Upper lobe of right lung (tissue), 1 donor: ENCODE measurements at regions of chr12 and their contacts with region 1.

Region 1: DNA sequence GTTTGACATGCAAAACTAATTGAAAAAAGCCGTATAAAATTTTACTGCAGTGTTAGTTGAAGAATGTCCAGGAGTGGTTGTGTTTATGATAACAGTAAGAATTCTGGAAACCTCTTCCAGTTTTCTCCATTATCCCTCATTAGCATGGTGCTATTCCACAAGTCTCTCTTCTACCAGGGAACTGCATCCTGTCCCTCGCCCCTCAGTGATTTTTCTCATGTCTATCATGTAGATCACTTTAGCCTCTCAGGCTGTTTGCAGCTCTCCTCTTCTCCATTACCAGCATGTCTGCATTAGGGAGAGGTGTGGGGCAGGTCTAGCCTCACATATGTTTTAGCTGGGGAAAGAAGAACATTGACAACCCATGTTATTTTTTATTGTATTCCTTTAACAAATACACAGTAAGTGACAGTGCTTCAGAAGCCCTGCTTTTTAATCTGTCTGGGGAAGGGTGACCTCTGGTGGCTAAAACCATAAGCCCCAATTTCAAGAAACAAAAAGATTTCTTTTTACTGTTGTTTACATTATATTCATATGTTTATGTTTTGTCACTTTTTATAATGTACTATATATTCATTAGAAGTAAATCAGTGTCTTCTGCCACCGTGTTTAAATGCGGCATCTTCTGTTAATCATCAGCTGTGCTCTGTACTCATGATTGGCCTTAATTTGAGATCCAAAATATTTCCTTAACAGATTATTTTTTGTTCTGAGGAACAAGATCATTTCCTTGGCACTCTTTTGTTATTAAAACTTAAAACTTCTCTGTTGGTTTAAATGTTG is 70.7 kb downstream of the RASSF8 start:
- DNase-seq: no peak
- ATAC-seq: peak; percentile 77
- H3K4me3 ChIP-seq: no peak overlapping the region
- H3K27ac ChIP-seq: no peak overlapping the region
- H3K4me1 ChIP-seq: no peaks in the 10 kb centered on the region
- H3K27me3 ChIP-seq: no peaks in the 10 kb centered on the region
- CTCF ChIP-seq: peak; percentile 87

Region 2: GRCh38 chr12:25436203-25437030 is 592.7 kb before region 1 on chr12:
- intact Hi-C with region 1: loop called (anchors 10 kb)
- DNase-seq: no peak
- ATAC-seq: peak; percentile 82
- H3K4me3 ChIP-seq: peak overlapping the region; percentile 41
- H3K27ac ChIP-seq: no peak overlapping the region
- H3K4me1 ChIP-seq: peaks cover 4% of the 10 kb centered on the region
- H3K27me3 ChIP-seq: no peaks in the 10 kb centered on the region
- CTCF ChIP-seq: peak; percentile 93

Region 3: GRCh38 chr12:26126340-26127284 is 97.5 kb after region 1 on chr12:
- intact Hi-C with region 1: no loop called
- DNase-seq: peak; percentile 92
- ATAC-seq: peak; percentile 80
- H3K4me3 ChIP-seq: peak overlapping the region; percentile 56
- H3K27ac ChIP-seq: peak overlapping the region; percentile 84
- H3K4me1 ChIP-seq: peaks cover 26% of the 10 kb centered on the region
- H3K27me3 ChIP-seq: peaks cover 59% of the 10 kb centered on the region
- CTCF ChIP-seq: no peak

Region 4: GRCh38 chr12:26136688-26137087 is 107.5 kb after region 1 on chr12:
- intact Hi-C with region 1: no loop called
- DNase-seq: no peak
- ATAC-seq: no peak
- H3K4me3 ChIP-seq: no peak overlapping the region
- H3K27ac ChIP-seq: no peak overlapping the region
- H3K4me1 ChIP-seq: no peaks in the 10 kb centered on the region
- H3K27me3 ChIP-seq: no peaks in the 10 kb centered on the region
- CTCF ChIP-seq: no peak

Region 5: GRCh38 chr12:26162905-26163304 is 133.8 kb after region 1 on chr12:
- intact Hi-C with region 1: no loop called
- DNase-seq: no peak
- ATAC-seq: no peak
- H3K4me3 ChIP-seq: no peak overlapping the region
- H3K27ac ChIP-seq: no peak overlapping the region
- H3K4me1 ChIP-seq: no peaks in the 10 kb centered on the region
- H3K27me3 ChIP-seq: peaks cover 4% of the 10 kb centered on the region
- CTCF ChIP-seq: no peak

Region 6: DNA sequence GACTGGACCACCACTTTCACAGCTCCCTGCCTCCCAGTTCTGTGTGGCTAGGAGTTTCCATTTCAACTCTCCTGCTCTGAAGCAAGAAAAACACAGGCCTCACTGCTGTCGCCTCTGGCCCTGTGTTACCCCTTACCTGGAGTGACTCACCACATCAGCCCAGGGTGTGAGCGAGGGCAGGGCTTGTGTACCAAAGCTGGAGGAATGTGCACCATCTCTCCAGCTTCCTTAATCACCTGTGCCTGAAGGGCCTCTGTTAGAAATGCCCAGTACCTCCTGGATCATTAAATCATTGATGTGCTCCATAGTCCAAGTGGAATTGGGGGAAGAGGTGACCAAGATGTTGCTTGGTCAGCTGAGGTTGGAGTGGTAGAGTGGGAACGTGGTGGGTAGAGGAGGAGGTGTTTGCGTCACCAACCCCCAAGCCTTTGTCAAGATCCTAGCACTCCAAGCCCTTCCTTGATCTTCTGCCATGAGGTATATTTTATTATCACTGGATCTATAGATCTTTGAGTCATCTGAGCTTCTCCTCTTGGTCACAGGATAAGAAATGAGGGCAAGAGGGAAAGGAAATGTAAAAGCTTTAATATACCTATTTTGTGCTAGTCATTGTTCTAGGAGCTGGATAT is 217.5 kb after region 1 on chr12:
- intact Hi-C with region 1: no loop called
- DNase-seq: no peak
- ATAC-seq: peak; percentile 89
- H3K4me3 ChIP-seq: no peak overlapping the region
- H3K27ac ChIP-seq: no peak overlapping the region
- H3K4me1 ChIP-seq: no peaks in the 10 kb centered on the region
- H3K27me3 ChIP-seq: no peaks in the 10 kb centered on the region
- CTCF ChIP-seq: no peak